Activated T-helper 2 cell treated with anti-CD3 and anti-CD28 coated beads, Interferon-gamma antibody, Interleukin-2, Interleukin-4, amounts not matched to agents 10 μg/mL and 5 μg/mL and 100 μg/mL, durations not matched to agents 14 hours and 24 hours and 36 hours (primary cell): ENCODE measurements at regions of chr6 and their contacts with region 1.

Region 1: DNA sequence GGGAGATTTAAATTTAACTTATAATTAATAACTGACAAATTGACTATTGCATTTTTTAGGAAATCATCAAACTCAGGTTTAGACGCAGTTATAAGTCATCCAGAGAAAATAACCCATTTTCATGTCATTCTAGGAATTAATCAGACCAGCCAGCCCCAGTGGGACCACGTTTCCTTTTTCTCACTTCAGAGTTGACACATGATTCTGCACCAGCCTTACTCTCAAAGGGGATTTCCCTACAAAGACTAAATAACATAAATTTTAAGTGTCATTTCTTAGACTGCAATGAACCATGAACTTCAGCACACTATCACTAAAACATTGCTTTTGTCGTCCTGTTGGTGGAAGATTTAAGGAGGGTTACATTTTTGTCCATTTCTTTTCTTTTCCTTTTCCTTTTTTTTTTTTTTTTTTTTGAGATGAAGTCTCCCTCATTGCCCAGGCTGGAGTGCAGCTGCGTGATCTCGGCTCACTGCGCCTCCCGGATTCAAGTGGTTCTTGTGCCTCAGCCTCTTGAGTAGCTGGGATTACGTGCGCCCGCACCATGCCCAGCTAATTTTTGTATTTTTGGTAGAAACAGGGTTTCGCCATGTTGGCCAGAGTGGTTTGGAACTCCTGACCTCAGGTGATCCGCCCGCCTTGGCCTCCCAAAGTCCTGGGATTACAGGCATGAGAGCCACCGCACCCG is 3.6 kb downstream of the IPCEF1 start:
- DNase-seq: no peak
- H3K4me3 Mint-ChIP-seq: no peak overlapping the region
- H3K27ac Mint-ChIP-seq: no peak overlapping the region
- H3K4me1 Mint-ChIP-seq: peaks cover 24% of the 10 kb centered on the region
- H3K27me3 Mint-ChIP-seq: peaks cover 50% of the 10 kb centered on the region

Region 2: DNA sequence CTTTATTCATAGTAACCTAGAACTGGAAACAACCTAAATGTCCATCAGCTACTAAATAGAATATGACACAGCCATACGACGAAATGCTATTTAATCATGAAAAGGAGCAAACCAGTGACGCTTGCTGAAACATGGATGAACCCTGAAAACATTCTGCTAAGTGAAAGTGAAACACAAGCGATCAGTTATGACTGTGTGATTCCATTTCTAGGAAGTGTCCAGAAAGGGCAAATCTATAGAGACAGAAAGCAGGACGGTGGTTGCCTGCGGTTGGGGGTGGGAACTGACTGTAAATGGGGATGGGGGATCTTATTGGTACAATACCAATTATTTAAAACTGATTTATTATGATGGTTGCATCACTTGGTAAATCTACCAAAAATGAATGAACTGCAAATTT is 123.3 kb before region 1 on chr6:
- intact Hi-C with region 1: loop called (anchors 2 kb)
- DNase-seq: peak; percentile 45
- H3K4me3 Mint-ChIP-seq: peak overlapping the region; percentile 51
- H3K27ac Mint-ChIP-seq: peak overlapping the region; percentile 66
- H3K4me1 Mint-ChIP-seq: peaks cover 44% of the 10 kb centered on the region
- H3K27me3 Mint-ChIP-seq: no peaks in the 10 kb centered on the region

Region 3: DNA sequence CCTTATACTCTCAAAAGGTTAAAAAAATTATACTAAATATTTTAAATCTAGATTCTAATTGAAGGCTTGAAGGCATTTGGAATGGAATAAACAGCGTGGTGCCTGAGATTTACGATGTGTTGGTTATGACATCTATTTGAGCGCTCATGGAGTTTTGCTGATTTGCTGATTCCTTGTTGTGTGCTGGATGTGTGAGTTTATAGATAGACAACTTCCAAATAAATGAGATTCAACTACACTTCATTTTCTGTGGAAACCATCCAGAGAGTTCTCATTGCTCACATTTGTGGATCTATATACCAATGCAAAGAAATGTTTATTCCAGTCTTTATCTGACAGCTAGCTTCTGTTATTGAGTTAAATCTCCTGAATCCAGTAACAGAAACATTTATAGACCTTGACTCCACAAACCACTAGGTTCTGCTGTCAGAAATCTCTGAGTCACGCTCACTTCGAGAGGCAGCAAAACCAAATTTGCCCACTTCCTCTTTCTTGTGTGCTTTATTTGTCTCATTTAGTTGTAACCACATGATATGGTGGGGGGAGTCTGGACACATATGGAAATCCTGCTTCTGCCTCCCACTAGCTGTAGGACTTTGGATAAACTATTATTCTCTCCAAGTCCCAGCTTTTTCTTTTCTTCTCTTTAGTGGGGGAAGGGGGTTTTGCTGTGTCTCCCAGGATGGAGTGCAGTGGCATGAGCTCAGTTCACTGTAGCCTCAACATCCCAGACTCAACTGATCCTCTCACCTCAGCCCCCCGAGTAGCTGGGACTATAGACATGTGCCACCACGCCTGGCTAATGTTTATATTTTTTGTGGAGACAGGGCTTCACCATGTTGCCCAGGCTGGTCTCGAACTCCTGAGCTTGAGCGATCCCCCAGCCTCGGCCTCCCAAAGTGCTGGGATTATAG is 50.9 kb before region 1 on chr6:
- intact Hi-C with region 1: loop called (anchors 2 kb)
- DNase-seq: no peak
- H3K4me3 Mint-ChIP-seq: no peak overlapping the region
- H3K27ac Mint-ChIP-seq: no peak overlapping the region
- H3K4me1 Mint-ChIP-seq: peaks cover 18% of the 10 kb centered on the region
- H3K27me3 Mint-ChIP-seq: peaks cover 31% of the 10 kb centered on the region

Region 4: GRCh38 chr6:154370545-154370944 is 17.5 kb after region 1 on chr6:
- intact Hi-C with region 1: no loop called
- DNase-seq: no peak
- H3K4me3 Mint-ChIP-seq: no peak overlapping the region
- H3K27ac Mint-ChIP-seq: no peak overlapping the region
- H3K4me1 Mint-ChIP-seq: peaks cover 2% of the 10 kb centered on the region
- H3K27me3 Mint-ChIP-seq: peaks cover 16% of the 10 kb centered on the region

Region 5: GRCh38 chr6:154410619-154411072 is 57.6 kb after region 1 on chr6:
- intact Hi-C with region 1: loop called (anchors 2 kb)
- DNase-seq: no peak
- H3K4me3 Mint-ChIP-seq: no peak overlapping the region
- H3K27ac Mint-ChIP-seq: peak overlapping the region; percentile 70
- H3K4me1 Mint-ChIP-seq: peaks cover 18% of the 10 kb centered on the region
- H3K27me3 Mint-ChIP-seq: no peaks in the 10 kb centered on the region